Left lung (tissue), 14 donors: ENCODE measurements at regions of chr7 and their contacts with region 1.

Region 1: GRCh38 chr7:134782121-134782623 is 2.7 kb downstream of the CALD1 start:
- DNase-seq: no peak
- ATAC-seq: no peak
- H3K4me3 ChIP-seq: peak overlapping the region; percentile 35 to 44
- H3K27ac ChIP-seq: peak overlapping the region in 1 of 2 donors; percentile 21
- H3K4me1 ChIP-seq: peaks cover 6 to 21% of the 10 kb centered on the region in 2 donors
- H3K27me3 ChIP-seq: peaks cover 0 to 11% of the 10 kb centered on the region in 2 donors
- CTCF ChIP-seq: no peak

Region 2: GRCh38 chr7:134327896-134328295 is 454.3 kb before region 1 on chr7:
- intact Hi-C with region 1: no loop called
- DNase-seq: peak in 1 of 4 donors; percentile 28
- ATAC-seq: peak; percentile 54
- H3K4me3 ChIP-seq: no peak overlapping the region
- H3K27ac ChIP-seq: no peak overlapping the region
- H3K4me1 ChIP-seq: no peaks in the 10 kb centered on the region
- H3K27me3 ChIP-seq: peaks cover 0 to 11% of the 10 kb centered on the region in 2 donors
- CTCF ChIP-seq: peak in 1 of 2 donors; percentile 17

Region 3: DNA sequence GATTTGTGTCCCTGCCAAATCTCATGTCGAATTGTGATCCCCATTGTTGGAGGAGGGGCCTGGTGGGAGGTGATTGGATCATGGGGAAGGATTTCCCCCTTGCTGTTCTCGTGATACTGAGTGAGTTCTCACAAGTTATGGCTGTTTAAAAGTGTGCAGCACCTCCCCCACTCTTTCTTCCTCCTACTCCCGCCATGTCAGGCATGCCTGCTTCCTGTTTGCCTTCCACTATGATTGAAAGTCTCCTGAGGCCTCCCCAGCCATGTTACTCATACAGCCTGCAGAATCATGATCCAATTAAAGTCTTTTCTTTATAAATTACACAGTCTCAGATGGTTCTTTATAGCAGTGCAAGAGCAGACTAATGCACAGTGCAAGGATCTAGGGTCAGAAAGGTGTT is 72.6 kb after region 1 on chr7:
- intact Hi-C with region 1: no loop called
- DNase-seq: no peak
- ATAC-seq: peak; percentile 25
- H3K4me3 ChIP-seq: no peak overlapping the region
- H3K27ac ChIP-seq: no peak overlapping the region
- H3K4me1 ChIP-seq: peaks cover 8 to 17% of the 10 kb centered on the region in 2 donors
- H3K27me3 ChIP-seq: no peaks in the 10 kb centered on the region
- CTCF ChIP-seq: no peak

Region 4: DNA sequence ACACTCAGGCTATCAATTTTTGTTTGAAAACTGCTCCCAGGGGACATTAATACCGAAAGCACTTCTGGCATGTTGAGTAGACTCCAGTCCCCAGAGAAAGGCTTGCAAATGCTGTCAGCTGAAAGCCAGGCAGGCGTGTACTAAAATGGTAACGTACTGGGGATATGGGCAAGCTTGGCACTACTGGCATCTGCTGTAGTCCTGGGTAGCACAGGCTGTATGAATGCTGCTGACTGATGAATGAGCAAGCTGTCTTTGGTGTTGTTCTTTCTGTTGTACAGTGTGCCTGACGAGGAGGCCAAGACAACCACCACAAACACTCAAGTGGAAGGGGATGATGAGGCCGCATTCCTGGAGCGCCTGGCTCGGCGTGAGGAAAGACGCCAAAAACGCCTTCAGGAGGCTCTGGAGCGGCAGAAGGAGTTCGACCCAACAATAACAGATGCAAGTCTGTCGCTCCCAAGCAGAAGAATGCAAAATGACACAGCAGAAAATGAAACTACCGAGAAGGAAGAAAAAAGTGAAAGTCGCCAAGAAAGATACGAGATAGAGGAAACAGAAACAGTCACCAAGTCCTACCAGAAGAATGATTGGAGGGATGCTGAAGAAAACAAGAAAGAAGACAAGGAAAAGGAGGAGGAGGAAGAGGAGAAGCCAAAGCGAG is 150.7 kb after region 1 on chr7:
- intact Hi-C with region 1: loop called in 1 of 2 experiments (anchors 10 kb)
- DNase-seq: no peak
- ATAC-seq: no peak
- H3K4me3 ChIP-seq: no peak overlapping the region
- H3K27ac ChIP-seq: no peak overlapping the region
- H3K4me1 ChIP-seq: no peaks in the 10 kb centered on the region
- H3K27me3 ChIP-seq: no peaks in the 10 kb centered on the region
- CTCF ChIP-seq: no peak